Common myeloid progenitor, CD34-positive (primary cell): ENCODE measurements at regions of chr12 and their contacts with region 1.

Region 1: GRCh38 chr12:6592087-6592486 is 15.1 kb downstream of the CHD4 start:
- DNase-seq: no peak
- H3K4me3 ChIP-seq: no peak overlapping the region
- H3K27ac ChIP-seq: no peak overlapping the region
- H3K4me1 ChIP-seq: no peaks in the 10 kb centered on the region
- H3K27me3 ChIP-seq: no peaks in the 10 kb centered on the region

Region 2: DNA sequence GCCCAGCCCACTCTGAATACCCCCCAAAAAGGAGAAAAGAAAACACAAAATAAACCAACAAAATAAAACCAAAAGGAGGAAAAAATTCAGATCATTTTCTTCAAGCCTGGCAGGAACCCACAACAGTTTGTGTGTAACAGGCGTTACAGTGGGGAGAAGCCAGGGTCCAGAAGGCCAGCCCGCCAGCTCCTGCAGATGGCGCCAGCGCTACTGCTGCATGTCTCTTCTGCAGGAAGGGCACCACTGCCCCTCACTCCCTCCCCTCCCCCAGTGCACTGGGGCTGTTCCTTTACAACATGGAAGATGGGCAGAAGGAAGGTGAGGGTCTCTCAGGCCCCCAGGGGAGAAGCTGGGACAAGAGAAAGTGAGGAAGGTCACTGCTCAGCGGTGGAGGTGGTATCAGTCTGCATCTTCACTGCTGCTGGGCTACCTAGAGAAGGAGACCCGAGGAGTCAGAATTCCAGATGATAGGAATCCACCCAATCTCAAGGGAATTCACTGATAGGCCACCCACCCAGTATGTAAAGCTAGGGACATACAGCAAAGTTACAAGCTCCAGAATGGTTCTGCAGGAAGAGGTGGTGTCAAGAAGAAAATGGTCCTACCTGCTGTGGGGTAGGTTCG is 21.7 kb before region 1 on chr12:
- CTCF ChIA-PET with region 1: interaction called, 14 read pairs
- POLR2A ChIA-PET with region 1: interaction called, 3 read pairs
- DNase-seq: peak; percentile 54 to 79 (median 77)
- H3K4me3 ChIP-seq: no peak overlapping the region
- H3K27ac ChIP-seq: no peak overlapping the region
- H3K4me1 ChIP-seq: peaks cover 7 to 19% (median 9%) of the 10 kb centered on the region in 4 experiments
- H3K27me3 ChIP-seq: no peaks in the 10 kb centered on the region

Region 3: DNA sequence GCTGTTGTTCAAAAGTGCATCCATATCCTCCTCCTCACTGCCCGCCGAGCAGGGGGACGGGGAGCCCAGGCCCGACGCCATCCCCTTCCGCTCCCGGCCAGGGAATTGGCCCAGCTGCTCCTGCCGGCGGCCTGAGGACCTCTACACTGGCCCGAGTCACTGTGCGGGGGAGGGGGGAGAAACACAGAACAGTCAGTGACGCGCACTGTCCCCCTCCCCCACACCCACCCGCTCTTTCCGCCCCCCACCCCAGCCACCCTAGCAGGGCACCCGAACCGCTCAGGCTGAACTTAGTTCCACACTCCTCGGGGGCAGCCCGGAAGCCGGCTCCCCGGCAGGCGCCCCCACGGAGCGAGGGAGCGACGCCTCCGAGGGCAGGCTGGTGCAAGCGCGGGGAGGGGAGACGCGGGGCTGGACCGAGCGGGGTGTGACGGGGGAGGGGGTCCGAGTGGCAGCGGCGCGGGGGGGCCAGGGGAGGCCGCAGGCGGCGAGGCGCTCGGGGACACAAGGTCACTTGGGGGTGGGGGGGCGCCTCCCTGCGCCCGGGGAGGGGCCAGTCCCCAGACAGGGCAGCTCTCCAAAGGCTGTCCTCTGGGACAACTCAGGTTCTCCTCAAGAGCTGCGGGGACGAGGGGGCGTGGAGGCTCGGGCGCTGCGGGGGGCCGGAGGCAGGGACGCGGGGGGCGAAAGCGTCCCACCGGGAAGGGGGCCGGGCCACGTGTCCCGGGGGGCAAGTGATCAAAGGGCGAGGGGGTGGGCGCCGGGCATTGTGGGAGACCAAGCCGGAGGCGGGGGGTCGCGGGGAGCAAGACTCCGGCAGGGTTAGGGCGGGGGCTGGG is 14.4 kb after region 1 on chr12:
- CTCF ChIA-PET with region 1: interaction called, 11 read pairs
- POLR2A ChIA-PET with region 1: interaction called, 5 read pairs
- DNase-seq: peak in 2 of 3 donors; percentile 51 to 61
- H3K4me3 ChIP-seq: peak overlapping the region; percentile 69 to 96 (median 82)
- H3K27ac ChIP-seq: peak overlapping the region; percentile 58 to 83
- H3K4me1 ChIP-seq: peaks cover 32 to 72% (median 62%) of the 10 kb centered on the region in 4 experiments
- H3K27me3 ChIP-seq: no peaks in the 10 kb centered on the region

Region 4: DNA sequence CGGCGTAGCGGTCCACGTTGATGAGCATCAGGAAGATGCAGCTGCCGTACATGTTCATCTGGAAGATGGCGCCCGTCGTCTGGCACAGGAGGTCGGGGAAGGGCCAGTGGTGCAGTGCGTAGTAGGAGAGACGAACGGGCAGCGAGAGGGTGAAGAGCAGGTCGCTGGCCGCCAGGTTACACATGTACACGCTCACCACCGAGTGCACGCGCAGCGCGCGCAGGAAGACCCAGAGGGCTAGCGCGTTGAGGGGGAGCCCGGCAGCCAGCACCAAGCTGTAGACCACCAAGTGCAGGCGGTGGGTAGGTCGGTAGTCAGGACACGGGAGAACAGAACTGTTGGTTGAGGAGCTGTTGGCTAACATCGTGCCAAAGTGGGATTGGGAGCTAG is 28.8 kb after region 1 on chr12:
- CTCF ChIA-PET with region 1: no interaction called
- POLR2A ChIA-PET with region 1: no interaction called
- DNase-seq: no peak
- H3K4me3 ChIP-seq: peak overlapping the region in 3 of 7 experiments; percentile 14 to 54 (median 48)
- H3K27ac ChIP-seq: no peak overlapping the region
- H3K4me1 ChIP-seq: peaks cover 4 to 31% (median 25%) of the 10 kb centered on the region in 4 experiments
- H3K27me3 ChIP-seq: no peaks in the 10 kb centered on the region